ENCODE measurements at regions of chr1 and their contacts with region 1.

Region 1: GRCh38 chr1:229507951-229508822 is at the start of gene NUP133:
- DNase-seq: peak; percentile 91 to 95
- H3K4me3 ChIP-seq: peak within 1 kb of the TSS; percentile 74
- H3K27ac ChIP-seq: peak within 1 kb of the TSS; percentile 73
- H3K4me1 ChIP-seq: peaks cover 11% of the 10 kb centered on the region
- H3K27me3 ChIP-seq: no peaks in the 10 kb centered on the region
- CTCF ChIP-seq: no peak
- total RNA-seq, gene NUP133: 38.5 and 42.9 TPM in 2 replicates

Region 2: DNA sequence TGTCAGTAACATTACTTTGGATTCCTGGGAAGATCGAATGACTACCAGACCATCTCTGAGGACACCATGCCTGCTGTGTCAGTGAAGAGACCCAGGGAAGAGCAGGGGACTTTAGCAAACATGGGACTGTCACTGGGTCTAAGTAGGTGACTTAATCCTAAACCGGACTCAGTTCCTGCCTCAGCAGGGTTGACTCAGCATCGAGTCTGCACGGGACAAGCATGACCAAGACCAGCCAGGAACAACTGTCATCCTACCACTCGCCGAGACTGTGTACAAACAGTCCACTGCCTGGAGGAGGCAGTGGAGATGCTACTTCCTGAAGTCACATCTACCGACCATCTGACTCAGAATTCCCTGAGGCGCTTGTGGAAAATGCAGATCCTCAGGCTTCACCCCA is 290.5 kb before region 1 on chr1:
- CTCF ChIA-PET with region 1: no interaction called
- POLR2A ChIA-PET with region 1: no interaction called
- intact Hi-C with region 1: no loop called
- DNase-seq: no peak
- H3K4me3 ChIP-seq: no peak overlapping the region
- H3K27ac ChIP-seq: no peak overlapping the region
- H3K4me1 ChIP-seq: peaks cover 16% of the 10 kb centered on the region
- H3K27me3 ChIP-seq: peaks cover 37% of the 10 kb centered on the region
- CTCF ChIP-seq: no peak

Region 3: GRCh38 chr1:229296541-229296941 is 211.6 kb before region 1 on chr1:
- CTCF ChIA-PET with region 1: no interaction called
- POLR2A ChIA-PET with region 1: no interaction called
- intact Hi-C with region 1: no loop called
- DNase-seq: peak in 1 of 2 experiments; percentile 55
- H3K4me3 ChIP-seq: no peak overlapping the region
- H3K27ac ChIP-seq: no peak overlapping the region
- H3K4me1 ChIP-seq: no peaks in the 10 kb centered on the region
- H3K27me3 ChIP-seq: no peaks in the 10 kb centered on the region
- CTCF ChIP-seq: no peak

Region 4: DNA sequence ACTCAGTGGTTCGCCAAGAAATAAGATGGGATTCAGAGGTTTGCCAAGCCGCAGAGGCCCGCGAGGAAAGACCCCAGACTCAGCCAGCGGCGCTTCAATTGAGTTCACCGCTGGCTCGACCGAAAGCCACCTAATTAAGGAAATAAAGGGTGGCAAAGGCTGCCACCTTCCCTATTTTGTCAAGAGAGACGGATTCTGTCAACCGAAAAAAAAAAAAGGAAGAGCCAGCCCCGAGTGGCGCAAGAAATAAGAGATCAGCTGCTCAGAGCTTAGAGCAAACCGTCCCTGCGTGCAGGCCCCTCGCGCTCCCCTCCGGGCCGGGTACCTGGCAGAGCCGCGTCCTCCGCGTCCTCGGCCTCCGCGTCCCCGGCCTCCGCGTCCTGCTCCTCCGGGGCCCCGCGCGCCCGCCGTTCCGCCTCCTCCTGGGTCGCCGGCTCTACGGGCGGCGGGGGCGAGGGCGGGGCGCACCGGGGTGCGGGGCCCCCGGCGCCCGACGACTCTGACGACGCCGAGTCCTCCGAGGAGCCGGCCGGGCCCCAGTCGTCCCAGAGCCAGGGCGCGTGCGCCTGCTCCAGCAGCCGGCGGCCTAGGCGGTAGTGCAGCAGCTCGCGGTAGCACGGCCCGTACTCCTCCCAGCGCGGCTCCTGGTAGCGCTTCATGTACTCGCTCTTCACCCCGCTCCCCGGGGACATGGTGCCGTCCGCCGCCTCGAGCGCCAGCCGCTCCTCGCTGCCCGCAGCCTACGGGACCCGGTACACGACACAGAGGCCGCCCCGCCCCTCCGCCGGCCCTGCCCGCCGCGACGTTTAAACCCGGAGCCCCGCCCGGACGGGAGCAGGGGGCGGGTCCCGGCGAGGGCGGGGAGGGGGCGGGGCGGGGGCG is 166.2 kb before region 1 on chr1:
- CTCF ChIA-PET with region 1: no interaction called
- POLR2A ChIA-PET with region 1: no interaction called
- intact Hi-C with region 1: loop called (anchors 5 kb)
- DNase-seq: peak; percentile 55 to 84
- H3K4me3 ChIP-seq: peak overlapping the region; percentile 90
- H3K27ac ChIP-seq: no peak overlapping the region
- H3K4me1 ChIP-seq: peaks cover 16% of the 10 kb centered on the region; the same call in 1 of the 2 replicates
- H3K27me3 ChIP-seq: peaks cover 14% of the 10 kb centered on the region; the same call in 1 of the 2 replicates
- CTCF ChIP-seq: no peak

Region 5: GRCh38 chr1:229479660-229480399 is 28.4 kb before region 1 on chr1:
- CTCF ChIA-PET with region 1: interaction called, 4 read pairs
- POLR2A ChIA-PET with region 1: interaction called, 11 read pairs
- intact Hi-C with region 1: no loop called
- DNase-seq: no peak
- H3K4me3 ChIP-seq: no peak overlapping the region
- H3K27ac ChIP-seq: no peak overlapping the region
- H3K4me1 ChIP-seq: no peaks in the 10 kb centered on the region
- H3K27me3 ChIP-seq: no peaks in the 10 kb centered on the region
- CTCF ChIP-seq: no peak

Region 6: GRCh38 chr1:229558571-229559335 is 50.6 kb after region 1 on chr1 and contains the start of gene ABCB10:
- CTCF ChIA-PET with region 1: no interaction called
- POLR2A ChIA-PET with region 1: no interaction called
- intact Hi-C with region 1: loop called (anchors 5 kb)
- DNase-seq: peak; percentile 90 to 97
- H3K4me3 ChIP-seq: peak within 1 kb of the TSS; percentile 70
- H3K27ac ChIP-seq: no peak within 1 kb of the TSS
- H3K4me1 ChIP-seq: peaks cover 10% of the 10 kb centered on the region; the same call in 1 of the 2 replicates
- H3K27me3 ChIP-seq: no peaks in the 10 kb centered on the region
- CTCF ChIP-seq: peak; percentile 73
- total RNA-seq, gene ABCB10: 9.4 and 12.1 TPM in 2 replicates

Region 7: GRCh38 chr1:229625915-229626831 is 118.0 kb after region 1 on chr1 and contains the starts of genes TAF5L and URB2:
- CTCF ChIA-PET with region 1: no interaction called
- POLR2A ChIA-PET with region 1: no interaction called
- intact Hi-C with region 1: loop called (anchors 1 kb)
- DNase-seq: peak; percentile 69 to 90
- H3K4me3 ChIP-seq: peak within 1 kb of the TSS; percentile 99
- H3K27ac ChIP-seq: peak within 1 kb of the TSS; percentile 27; the same call in 1 of the 2 replicates
- H3K4me1 ChIP-seq: peaks cover 22% of the 10 kb centered on the region
- H3K27me3 ChIP-seq: no peaks in the 10 kb centered on the region
- CTCF ChIP-seq: no peak
- total RNA-seq, gene TAF5L: 12.1 and 16.4 TPM in 2 replicates
- total RNA-seq, gene URB2: 6.6 and 7.7 TPM in 2 replicates

Region 8: GRCh38 chr1:230310381-230311163 is 802.4 kb after region 1 on chr1:
- CTCF ChIA-PET with region 1: no interaction called
- POLR2A ChIA-PET with region 1: no interaction called
- intact Hi-C with region 1: loop called (anchors 10 kb)
- DNase-seq: peak; percentile 46 to 69
- H3K4me3 ChIP-seq: no peak overlapping the region
- H3K27ac ChIP-seq: no peak overlapping the region
- H3K4me1 ChIP-seq: peaks cover 20% of the 10 kb centered on the region
- H3K27me3 ChIP-seq: peaks cover 14% of the 10 kb centered on the region; the same call in 1 of the 2 replicates
- CTCF ChIP-seq: peak; percentile 94